ENCODE measurements at regions of chr7 and their contacts with region 1.

Region 1: GRCh38 chr7:44847508-44847920 is 373 bp downstream of the H2AZ2 start:
- DNase-seq: peak; percentile 96
- ATAC-seq: peak; percentile 64
- H3K4me3 ChIP-seq: peak overlapping the region; percentile 67 to 97 (median 76)
- H3K4me3 Mint-ChIP-seq: peak overlapping the region; percentile 99
- H3K27ac ChIP-seq: peak overlapping the region; percentile 94
- H3K27ac Mint-ChIP-seq: peak overlapping the region; percentile 100
- H3K4me1 ChIP-seq: peaks cover 16 to 24% of the 10 kb centered on the region in 2 donors
- H3K4me1 Mint-ChIP-seq: peaks cover 31% of the 10 kb centered on the region
- H3K27me3 ChIP-seq: no peaks in the 10 kb centered on the region
- H3K27me3 Mint-ChIP-seq: no peaks in the 10 kb centered on the region
- CTCF ChIP-seq: peak; percentile 89

Region 2: GRCh38 chr7:44490351-44491200 is 356.9 kb before region 1 on chr7 and contains the start of gene NUDCD3:
- CTCF ChIA-PET with region 1: no interaction called
- POLR2A ChIA-PET with region 1: no interaction called
- intact Hi-C with region 1: loop called (anchors 1 kb)
- DNase-seq: peak; percentile 91
- ATAC-seq: peak; percentile 84
- H3K4me3 ChIP-seq: peak within 1 kb of the TSS; percentile 89 to 98 (median 93)
- H3K4me3 Mint-ChIP-seq: peak within 1 kb of the TSS; percentile 91
- H3K27ac ChIP-seq: peak within 1 kb of the TSS; percentile 93 to 94
- H3K27ac Mint-ChIP-seq: peak within 1 kb of the TSS; percentile 93
- H3K4me1 ChIP-seq: peaks cover 19 to 28% of the 10 kb centered on the region in 2 donors
- H3K4me1 Mint-ChIP-seq: peaks cover 44% of the 10 kb centered on the region
- H3K27me3 ChIP-seq: peaks cover 0 to 6% (median 3%) of the 10 kb centered on the region in 4 experiments
- H3K27me3 Mint-ChIP-seq: peaks cover 8% of the 10 kb centered on the region
- CTCF ChIP-seq: peak; percentile 27
- total RNA-seq, gene NUDCD3: 101 and 120 TPM in 2 replicates

Region 3: GRCh38 chr7:44587843-44588711 is 259.4 kb before region 1 on chr7:
- CTCF ChIA-PET with region 1: interaction called, 42 read pairs
- POLR2A ChIA-PET with region 1: interaction called, 10 read pairs
- intact Hi-C with region 1: loop called (anchors 1 kb)
- DNase-seq: peak; percentile 78
- ATAC-seq: peak; percentile 83
- H3K4me3 ChIP-seq: no peak overlapping the region
- H3K4me3 Mint-ChIP-seq: no peak overlapping the region
- H3K27ac ChIP-seq: no peak overlapping the region
- H3K27ac Mint-ChIP-seq: no peak overlapping the region
- H3K4me1 ChIP-seq: peaks cover 1 to 3% of the 10 kb centered on the region in 2 donors
- H3K4me1 Mint-ChIP-seq: peaks cover 5% of the 10 kb centered on the region
- H3K27me3 ChIP-seq: peaks cover 0 to 2% (median 0%) of the 10 kb centered on the region in 4 experiments
- H3K27me3 Mint-ChIP-seq: peaks cover 1% of the 10 kb centered on the region
- CTCF ChIP-seq: peak; percentile 86

Region 4: DNA sequence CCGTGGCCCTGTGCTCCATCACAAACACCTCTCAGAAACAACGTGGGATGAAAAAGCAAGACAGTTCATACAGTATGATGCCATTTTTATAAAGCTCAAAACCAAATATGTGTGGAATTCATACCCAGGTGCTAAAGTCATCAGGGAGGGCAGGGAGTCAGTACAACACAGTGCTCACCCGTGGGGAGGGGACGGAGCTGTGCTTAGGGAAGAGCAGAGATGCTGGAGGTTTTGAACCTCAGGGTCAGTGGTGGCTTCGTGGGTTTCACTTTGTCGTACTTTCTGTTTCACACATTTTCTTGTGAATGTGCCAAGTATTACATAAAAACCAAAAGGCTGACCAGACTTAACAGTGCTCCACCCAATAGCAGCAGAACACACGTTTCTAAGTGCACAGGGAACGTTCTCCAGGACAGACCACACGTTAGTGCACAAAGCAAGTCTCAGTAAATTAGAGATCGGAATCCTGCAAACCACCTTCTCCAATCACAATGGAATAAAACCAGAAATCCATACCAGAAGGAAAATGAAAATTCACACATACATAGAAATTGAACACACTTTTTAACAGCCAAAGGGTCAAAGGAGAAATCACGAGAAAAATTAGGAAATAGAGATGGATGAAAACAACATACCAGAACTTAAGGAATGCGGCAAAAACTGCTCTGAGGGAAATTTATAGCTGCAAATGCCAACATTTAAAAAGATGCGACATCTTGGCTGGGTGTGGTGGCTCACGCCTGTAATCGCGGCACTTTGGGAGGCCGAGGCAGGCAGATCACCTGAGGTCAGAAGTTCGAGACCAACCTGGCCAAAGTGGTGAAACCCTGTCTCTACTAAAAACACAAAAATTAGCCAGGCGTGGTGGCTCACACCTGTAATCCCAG is 77.5 kb before region 1 on chr7:
- CTCF ChIA-PET with region 1: interaction called, 15 read pairs
- POLR2A ChIA-PET with region 1: interaction called, 5 read pairs
- intact Hi-C with region 1: no loop called
- DNase-seq: peak; percentile 49
- ATAC-seq: peak; percentile 26
- H3K4me3 ChIP-seq: peak overlapping the region in 1 of 5 experiments; percentile 7
- H3K4me3 Mint-ChIP-seq: peak overlapping the region; percentile 51
- H3K27ac ChIP-seq: peak overlapping the region; percentile 73 to 77
- H3K27ac Mint-ChIP-seq: peak overlapping the region; percentile 97
- H3K4me1 ChIP-seq: peaks cover 31 to 62% of the 10 kb centered on the region in 2 donors
- H3K4me1 Mint-ChIP-seq: peaks cover 55% of the 10 kb centered on the region
- H3K27me3 ChIP-seq: no peaks in the 10 kb centered on the region
- H3K27me3 Mint-ChIP-seq: no peaks in the 10 kb centered on the region
- CTCF ChIP-seq: no peak

Region 5: DNA sequence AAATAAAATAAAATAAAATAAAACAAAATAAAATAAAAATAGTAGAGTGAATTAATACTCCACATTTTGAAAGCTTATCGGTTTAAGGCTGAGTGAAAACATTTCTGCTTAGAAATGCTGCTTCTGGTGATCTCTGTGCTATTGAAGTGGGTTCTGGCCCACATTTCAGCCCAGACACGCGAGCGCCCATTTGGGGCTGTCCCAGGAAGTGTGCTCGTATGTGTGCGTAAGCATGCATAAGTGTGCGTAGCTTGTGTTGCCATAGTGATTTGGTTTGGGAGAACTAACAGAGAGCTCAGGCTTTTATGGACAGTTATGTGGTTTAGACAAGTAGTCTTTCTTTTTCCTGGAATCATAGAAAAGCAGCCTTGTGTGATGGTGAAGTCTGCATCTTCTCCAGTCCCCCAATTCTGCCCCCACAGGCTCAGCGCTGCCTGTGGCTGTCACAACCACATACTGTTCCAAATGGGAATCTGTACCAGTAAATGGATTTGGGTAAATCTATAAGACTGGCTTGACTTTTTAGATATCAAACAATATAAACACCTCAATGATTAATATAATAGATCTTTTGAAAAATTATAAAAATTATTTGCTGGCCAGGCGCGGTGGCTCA is 67.6 kb after region 1 on chr7:
- CTCF ChIA-PET with region 1: interaction called, 15 read pairs
- POLR2A ChIA-PET with region 1: no interaction called
- intact Hi-C with region 1: loop called (anchors 2 kb)
- DNase-seq: peak; percentile 85
- ATAC-seq: peak; percentile 91
- H3K4me3 ChIP-seq: no peak overlapping the region
- H3K4me3 Mint-ChIP-seq: peak overlapping the region; percentile 63
- H3K27ac ChIP-seq: peak overlapping the region in 1 of 2 donors; percentile 68
- H3K27ac Mint-ChIP-seq: peak overlapping the region; percentile 89
- H3K4me1 ChIP-seq: peaks cover 5 to 12% of the 10 kb centered on the region in 2 donors
- H3K4me1 Mint-ChIP-seq: peaks cover 12% of the 10 kb centered on the region
- H3K27me3 ChIP-seq: no peaks in the 10 kb centered on the region
- H3K27me3 Mint-ChIP-seq: no peaks in the 10 kb centered on the region
- CTCF ChIP-seq: no peak

Region 6: DNA sequence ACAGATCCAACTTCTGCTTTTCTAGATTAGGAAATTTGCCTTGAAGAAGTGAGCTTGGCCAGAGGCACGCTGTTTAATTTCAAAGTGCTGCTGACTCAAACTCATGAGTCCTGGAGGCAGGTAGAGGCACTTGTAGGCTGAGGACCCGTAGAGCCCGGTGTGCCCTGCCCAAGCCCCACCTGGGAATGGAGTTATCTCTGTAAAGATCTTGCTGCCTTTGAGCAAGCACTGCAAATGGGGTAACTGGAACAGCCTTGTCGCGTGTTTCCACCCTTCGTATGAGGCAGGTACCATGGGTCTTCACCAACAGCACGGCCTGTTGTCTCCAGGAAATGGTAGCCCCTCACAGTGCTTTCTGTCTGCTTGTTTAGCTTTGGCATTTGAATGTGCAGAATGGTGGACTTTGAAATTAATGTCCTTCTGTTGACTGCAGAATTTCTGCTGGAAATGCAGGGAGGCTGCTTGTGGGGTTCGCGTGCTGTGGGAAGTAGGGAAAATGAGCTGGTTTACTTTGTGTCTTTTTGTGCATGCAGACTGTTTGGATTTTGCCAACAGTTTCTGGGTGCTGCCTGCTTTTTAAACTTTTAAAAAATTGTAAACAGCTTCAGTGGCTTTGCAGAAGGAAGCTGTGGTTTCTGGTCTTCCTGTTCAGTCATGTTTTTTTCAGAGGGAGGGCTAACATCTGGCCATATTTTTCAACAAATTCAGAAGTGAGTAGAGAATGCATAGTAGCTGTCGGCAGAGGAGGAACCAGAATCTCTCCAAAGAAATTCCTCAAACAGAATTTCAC is 179.7 kb after region 1 on chr7:
- CTCF ChIA-PET with region 1: no interaction called
- POLR2A ChIA-PET with region 1: no interaction called
- intact Hi-C with region 1: loop called (anchors 5 kb)
- DNase-seq: peak; percentile 77
- ATAC-seq: peak; percentile 73
- H3K4me3 ChIP-seq: peak overlapping the region; percentile 77 to 99 (median 83)
- H3K4me3 Mint-ChIP-seq: peak overlapping the region; percentile 85
- H3K27ac ChIP-seq: peak overlapping the region; percentile 76 to 83
- H3K27ac Mint-ChIP-seq: peak overlapping the region; percentile 79
- H3K4me1 ChIP-seq: peaks cover 39 to 56% of the 10 kb centered on the region in 2 donors
- H3K4me1 Mint-ChIP-seq: peaks cover 57% of the 10 kb centered on the region
- H3K27me3 ChIP-seq: no peaks in the 10 kb centered on the region
- H3K27me3 Mint-ChIP-seq: no peaks in the 10 kb centered on the region
- CTCF ChIP-seq: no peak

Measured in B cell (primary cell).